A549 (cell line): ENCODE measurements at regions of chr17 and their contacts with region 1.

Region 1: DNA sequence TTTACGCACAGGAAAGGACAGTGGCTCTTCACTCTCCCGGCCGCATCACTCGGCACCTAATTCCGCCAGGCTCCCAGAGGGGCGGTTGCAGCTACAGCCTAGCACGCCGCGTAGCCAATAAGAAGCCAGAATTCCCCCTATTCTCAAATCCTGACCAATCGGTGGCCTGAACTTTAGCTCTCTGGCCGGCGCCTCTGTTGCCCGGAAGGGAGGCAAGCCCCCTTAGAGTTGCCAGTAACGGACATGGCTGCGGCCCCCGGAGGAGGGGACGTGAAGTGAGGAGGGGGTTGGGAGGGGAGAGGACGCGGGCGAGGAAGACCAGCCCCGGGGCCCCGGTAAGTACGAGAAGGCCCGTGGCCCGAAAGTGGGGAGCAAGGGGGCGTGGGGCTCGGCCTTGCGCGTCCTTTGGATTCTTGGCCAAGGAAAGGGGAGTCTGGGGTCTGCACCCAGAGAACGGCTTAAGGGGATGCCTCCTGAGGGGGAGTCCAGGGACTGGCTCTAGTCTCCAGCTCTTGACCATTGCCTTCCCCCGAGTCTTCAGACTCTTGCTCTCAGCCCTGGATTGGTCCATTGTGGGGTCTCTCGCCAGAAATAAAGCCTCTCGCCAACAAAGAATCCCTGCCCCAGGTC is at the start of gene TMEM94:
- DNase-seq: peak; percentile 96 to 99
- ATAC-seq: peak; percentile 98 to 99
- H3K4me3 ChIP-seq: peak within 1 kb of the TSS; percentile 91
- H3K27ac ChIP-seq: peak within 1 kb of the TSS; percentile 92 to 95
- H3K4me1 ChIP-seq: peaks cover 23% of the 10 kb centered on the region
- CTCF ChIP-seq: no peak
- EP300 ChIP-seq: no peak
- POLR2A ChIP-seq: peak; percentile 55
- RAD21 ChIP-seq: no peak
- polyA plus RNA-seq, gene TMEM94: 30.5 and 42.7 TPM in 2 replicates

Region 2: DNA sequence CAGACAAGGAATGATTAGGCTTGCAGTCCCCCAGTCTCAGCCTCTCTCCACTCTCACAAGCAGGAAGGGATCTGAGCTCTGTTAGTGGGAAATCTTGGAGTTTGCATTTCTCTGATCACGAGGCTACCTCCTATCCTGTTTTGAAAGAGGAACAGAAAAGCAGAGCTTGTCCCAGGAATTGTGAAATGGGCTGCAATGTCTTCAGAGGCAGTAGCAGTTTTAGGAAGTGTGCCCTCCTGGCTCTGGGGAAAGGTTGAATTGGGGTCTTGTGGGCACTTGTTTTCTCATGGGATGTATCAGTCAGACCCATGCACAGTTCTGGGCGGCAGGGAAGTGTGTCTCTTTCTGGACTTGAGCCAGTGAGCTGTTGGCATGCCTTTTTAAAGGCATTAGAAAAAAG is 228.2 kb before region 1 on chr17:
- CTCF ChIA-PET with region 1: no interaction called
- POLR2A ChIA-PET with region 1: no interaction called
- DNase-seq: no peak
- ATAC-seq: no peak
- H3K4me3 ChIP-seq: no peak overlapping the region
- H3K27ac ChIP-seq: no peak overlapping the region
- H3K4me1 ChIP-seq: no peaks in the 10 kb centered on the region
- CTCF ChIP-seq: no peak
- EP300 ChIP-seq: no peak
- POLR2A ChIP-seq: no peak
- RAD21 ChIP-seq: no peak

Region 3: GRCh38 chr17:75442168-75443103 is 14.1 kb before region 1 on chr17:
- CTCF ChIA-PET with region 1: interaction called, 19 read pairs
- POLR2A ChIA-PET with region 1: interaction called, 13 read pairs
- DNase-seq: peak in 1 of 2 experiments; percentile 66
- ATAC-seq: peak; percentile 55 to 67
- H3K4me3 ChIP-seq: no peak overlapping the region
- H3K27ac ChIP-seq: peak overlapping the region in 1 of 2 experiments; percentile 36; a peak in 3 of 6 replicates
- H3K4me1 ChIP-seq: peaks cover 11% of the 10 kb centered on the region
- CTCF ChIP-seq: no peak
- EP300 ChIP-seq: peak in 1 of 2 experiments; percentile 30; a peak in 1 of 5 replicates
- POLR2A ChIP-seq: no peak
- RAD21 ChIP-seq: no peak

Region 4: DNA sequence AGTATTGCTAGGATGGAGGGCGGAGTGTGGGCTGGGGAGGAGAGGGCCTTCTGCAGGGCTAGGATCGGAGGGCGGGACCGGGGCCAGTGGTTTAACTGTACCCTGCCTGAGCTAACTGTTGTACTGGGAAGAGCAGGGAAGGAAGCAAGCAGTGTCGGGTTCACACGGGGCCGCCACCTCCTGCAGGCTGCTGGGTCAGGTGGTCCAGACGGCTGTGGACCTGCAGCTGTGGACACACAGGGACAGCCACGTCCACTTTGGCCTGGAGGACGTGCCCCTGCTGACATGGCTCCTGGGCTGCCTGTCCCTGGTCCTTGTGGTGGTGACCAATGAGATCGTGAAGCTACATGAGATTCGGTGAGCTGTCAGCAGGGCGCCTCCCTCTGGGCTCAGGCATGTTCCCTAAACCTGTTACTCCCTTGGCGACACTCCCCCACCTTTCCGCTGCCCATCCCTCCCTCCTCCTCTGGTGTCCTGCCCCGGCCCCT is 42.2 kb after region 1 on chr17:
- CTCF ChIA-PET with region 1: interaction called, 5 read pairs
- POLR2A ChIA-PET with region 1: interaction called, 10 read pairs
- DNase-seq: peak in 1 of 2 experiments; percentile 44
- ATAC-seq: peak; percentile 11 to 26; a peak in 2 of 6 replicates
- H3K4me3 ChIP-seq: no peak overlapping the region
- H3K27ac ChIP-seq: no peak overlapping the region
- H3K4me1 ChIP-seq: no peaks in the 10 kb centered on the region
- CTCF ChIP-seq: no peak; the same call in 2 of the 3 replicates
- EP300 ChIP-seq: no peak
- POLR2A ChIP-seq: no peak
- RAD21 ChIP-seq: no peak